ENCODE measurements at regions of chr6 and their contacts with region 1.

Region 1: DNA sequence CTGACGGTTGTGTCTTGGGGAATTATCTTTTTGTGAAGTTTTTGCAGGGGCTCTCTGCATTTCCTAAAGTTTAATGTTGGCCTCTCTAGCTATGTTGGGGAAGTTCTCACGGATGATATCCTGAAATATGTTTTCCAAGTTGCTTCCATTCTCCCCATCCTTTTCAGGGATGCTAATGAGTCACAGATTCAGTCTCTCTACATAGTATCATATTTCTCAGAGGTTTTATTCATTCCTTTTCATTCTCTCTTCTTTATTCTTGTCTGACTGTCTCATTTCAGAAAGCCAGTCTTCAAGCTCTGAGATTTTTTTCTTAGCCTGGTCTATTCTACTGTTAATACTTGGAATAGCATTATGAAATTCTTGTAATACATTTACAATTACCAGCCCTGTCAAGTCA is 61.3 kb downstream of the UNC5CL start:
- DNase-seq: no peak
- H3K4me3 ChIP-seq: no peak overlapping the region
- H3K27ac ChIP-seq: no peak overlapping the region
- H3K4me1 ChIP-seq: no peaks in the 10 kb centered on the region
- H3K27me3 ChIP-seq: peaks cover 0 to 13% of the 10 kb centered on the region in 2 donors
- CTCF ChIP-seq: no peak

Region 2: GRCh38 chr6:40779409-40779808 is 198.3 kb before region 1 on chr6:
- intact Hi-C with region 1: no loop called
- DNase-seq: no peak
- H3K4me3 ChIP-seq: no peak overlapping the region
- H3K27ac ChIP-seq: no peak overlapping the region
- H3K4me1 ChIP-seq: no peaks in the 10 kb centered on the region
- H3K27me3 ChIP-seq: peaks cover 0 to 2% of the 10 kb centered on the region in 2 donors
- CTCF ChIP-seq: no peak

Region 3: GRCh38 chr6:41033776-41034175 is 56.1 kb after region 1 on chr6:
- intact Hi-C with region 1: loop called (anchors 2 kb)
- DNase-seq: no peak
- H3K4me3 ChIP-seq: no peak overlapping the region
- H3K27ac ChIP-seq: no peak overlapping the region
- H3K4me1 ChIP-seq: peaks cover 0 to 2% (median under 1%) of the 10 kb centered on the region in 4 donors
- H3K27me3 ChIP-seq: no peaks in the 10 kb centered on the region
- CTCF ChIP-seq: no peak

Measured in tibial artery (tissue), 4 donors.